Activated naive CD4-positive, alpha-beta T cell treated with anti-CD3 and anti-CD28 coated beads for 36 hours (primary cell): ENCODE measurements at regions of chr7 and their contacts with region 1.

Region 1: DNA sequence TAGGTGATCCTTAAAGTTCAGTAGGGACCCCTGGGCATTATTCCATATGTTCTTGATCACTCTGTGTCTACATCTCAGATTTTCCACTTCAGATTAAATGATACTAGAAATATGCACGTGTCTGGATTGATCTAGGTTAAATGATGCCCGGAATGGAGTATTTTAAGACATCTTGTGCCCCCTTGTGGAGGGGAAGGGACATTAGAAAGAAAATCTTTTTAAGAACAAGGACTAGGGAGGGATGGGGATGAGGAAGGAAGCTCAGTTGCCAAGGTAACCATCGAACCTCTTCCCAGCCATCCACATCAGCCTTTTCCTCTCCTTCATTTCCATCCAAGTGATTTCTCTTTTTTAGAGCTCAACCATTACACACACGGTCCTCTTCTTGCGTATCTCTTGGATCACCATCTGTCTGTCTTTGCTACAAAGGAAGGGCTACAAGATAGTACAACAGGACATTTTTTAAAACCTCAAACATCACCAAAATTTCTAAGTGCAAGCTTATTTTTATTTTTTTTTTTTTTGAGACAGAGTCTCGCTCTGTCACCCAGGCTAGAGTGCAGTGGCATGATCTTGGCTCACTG is 40.5 kb downstream of the PRSS2 start:
- DNase-seq: peak; percentile 61
- H3K4me3 Mint-ChIP-seq: peak overlapping the region; percentile 42
- H3K27ac Mint-ChIP-seq: peak overlapping the region; percentile 99
- H3K4me1 Mint-ChIP-seq: peaks cover 83% of the 10 kb centered on the region
- H3K27me3 Mint-ChIP-seq: no peaks in the 10 kb centered on the region

Region 2: DNA sequence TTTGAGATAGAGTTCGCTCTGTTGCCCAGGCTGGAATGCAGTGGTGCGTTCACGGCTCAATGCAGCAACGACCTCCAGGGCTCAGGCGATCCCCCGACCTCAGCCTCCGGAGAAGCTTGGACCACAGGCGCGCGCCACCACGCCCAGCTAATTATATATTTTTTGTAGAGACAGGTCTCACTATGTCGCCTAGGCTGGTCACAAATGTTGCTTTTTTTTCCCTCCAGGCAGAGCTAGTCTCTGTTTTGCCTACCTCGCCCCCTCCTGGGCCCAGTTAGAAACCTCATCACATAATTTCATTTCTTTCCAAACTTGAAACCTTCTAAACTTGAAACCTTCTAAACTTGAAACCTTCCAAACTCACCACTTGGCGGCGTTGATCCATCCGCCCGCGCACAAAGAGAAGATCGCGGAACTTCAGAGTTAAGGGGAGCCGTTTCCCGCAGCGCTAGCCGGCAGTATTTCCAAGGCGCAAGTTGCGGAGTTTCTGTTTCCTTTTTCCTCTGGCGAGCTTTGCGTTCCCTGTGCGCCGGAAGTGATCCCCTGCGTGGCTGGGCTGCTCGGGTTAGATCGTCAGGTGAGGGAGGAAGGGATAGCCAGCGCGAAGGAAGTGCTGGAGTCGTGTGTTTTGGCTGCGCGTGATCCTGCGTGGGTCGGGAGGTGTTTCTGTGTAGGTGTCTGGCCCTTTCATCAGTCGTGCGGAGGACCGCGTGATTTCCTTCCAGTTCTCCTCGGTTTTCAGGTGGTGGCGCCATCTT is 1073.2 kb before region 1 on chr7 and contains the start of gene SSBP1:
- CTCF ChIA-PET with region 1: no interaction called
- intact Hi-C with region 1: loop called (anchors 10 kb)
- DNase-seq: peak; percentile 95
- H3K4me3 Mint-ChIP-seq: peak within 1 kb of the TSS; percentile 90
- H3K27ac Mint-ChIP-seq: peak within 1 kb of the TSS; percentile 96
- H3K4me1 Mint-ChIP-seq: peaks cover 36% of the 10 kb centered on the region
- H3K27me3 Mint-ChIP-seq: no peaks in the 10 kb centered on the region
- total RNA-seq, gene SSBP1: 202 to 230 TPM

Region 3: DNA sequence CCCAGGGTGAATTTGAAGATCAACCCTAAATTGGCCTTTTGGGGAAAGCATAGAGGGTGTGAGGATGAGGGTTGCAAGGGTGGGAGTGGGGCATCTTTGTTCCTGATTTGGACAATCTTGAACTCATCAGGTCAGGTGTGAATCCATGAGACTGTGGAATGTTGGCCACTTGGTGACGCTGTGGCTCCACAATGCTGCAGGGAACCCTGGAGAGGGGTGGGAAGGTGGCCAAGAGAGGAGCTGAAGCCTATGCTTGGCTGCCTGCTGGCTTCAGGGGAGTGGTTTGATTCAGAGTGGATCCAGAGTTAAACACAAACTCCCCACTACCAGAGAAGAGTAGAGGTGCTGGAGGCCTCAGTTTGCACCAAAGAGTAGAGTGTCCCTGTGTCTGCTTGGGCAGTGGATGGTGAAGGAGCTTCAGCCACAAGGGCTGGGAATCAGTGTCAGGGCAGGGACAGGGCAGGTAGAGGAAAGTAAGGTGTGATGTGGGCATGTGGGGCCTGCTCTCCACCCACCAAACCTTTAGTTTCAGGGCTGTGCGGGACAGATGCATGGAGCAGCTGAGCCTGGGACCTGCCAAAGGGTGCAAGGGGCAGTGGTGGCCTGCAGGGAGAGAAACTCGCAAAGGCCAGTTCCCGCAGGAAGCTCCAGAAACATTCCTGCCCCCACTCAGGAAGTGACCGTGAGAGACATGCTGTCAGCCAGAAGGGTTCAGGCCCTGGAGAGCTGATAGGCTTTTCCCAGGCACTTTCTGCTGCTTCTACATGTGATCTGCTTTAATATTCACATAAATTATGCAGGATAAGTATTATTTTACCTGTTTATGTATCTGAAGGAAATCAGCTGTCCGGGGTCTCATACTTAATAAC is 472.4 kb before region 1 on chr7:
- CTCF ChIA-PET with region 1: interaction called, 3 read pairs
- intact Hi-C with region 1: loop called (anchors 5 kb)
- DNase-seq: peak; percentile 64
- H3K4me3 Mint-ChIP-seq: no peak overlapping the region
- H3K27ac Mint-ChIP-seq: peak overlapping the region; percentile 73
- H3K4me1 Mint-ChIP-seq: peaks cover 19% of the 10 kb centered on the region
- H3K27me3 Mint-ChIP-seq: peaks cover 2% of the 10 kb centered on the region

Region 4: GRCh38 chr7:142557971-142558582 is 253.2 kb before region 1 on chr7:
- CTCF ChIA-PET with region 1: no interaction called
- intact Hi-C with region 1: loop called (anchors 1 kb)
- DNase-seq: peak; percentile 73
- H3K4me3 Mint-ChIP-seq: peak overlapping the region; percentile 58
- H3K27ac Mint-ChIP-seq: peak overlapping the region; percentile 79
- H3K4me1 Mint-ChIP-seq: peaks cover 8% of the 10 kb centered on the region
- H3K27me3 Mint-ChIP-seq: peaks cover 4% of the 10 kb centered on the region

Region 5: GRCh38 chr7:142711746-142712619 is 99.3 kb before region 1 on chr7:
- CTCF ChIA-PET with region 1: interaction called, 10 read pairs
- intact Hi-C with region 1: loop called (anchors 1 kb)
- DNase-seq: peak; percentile 51
- H3K4me3 Mint-ChIP-seq: peak overlapping the region; percentile 78
- H3K27ac Mint-ChIP-seq: peak overlapping the region; percentile 89
- H3K4me1 Mint-ChIP-seq: peaks cover 43% of the 10 kb centered on the region
- H3K27me3 Mint-ChIP-seq: no peaks in the 10 kb centered on the region

Region 6: DNA sequence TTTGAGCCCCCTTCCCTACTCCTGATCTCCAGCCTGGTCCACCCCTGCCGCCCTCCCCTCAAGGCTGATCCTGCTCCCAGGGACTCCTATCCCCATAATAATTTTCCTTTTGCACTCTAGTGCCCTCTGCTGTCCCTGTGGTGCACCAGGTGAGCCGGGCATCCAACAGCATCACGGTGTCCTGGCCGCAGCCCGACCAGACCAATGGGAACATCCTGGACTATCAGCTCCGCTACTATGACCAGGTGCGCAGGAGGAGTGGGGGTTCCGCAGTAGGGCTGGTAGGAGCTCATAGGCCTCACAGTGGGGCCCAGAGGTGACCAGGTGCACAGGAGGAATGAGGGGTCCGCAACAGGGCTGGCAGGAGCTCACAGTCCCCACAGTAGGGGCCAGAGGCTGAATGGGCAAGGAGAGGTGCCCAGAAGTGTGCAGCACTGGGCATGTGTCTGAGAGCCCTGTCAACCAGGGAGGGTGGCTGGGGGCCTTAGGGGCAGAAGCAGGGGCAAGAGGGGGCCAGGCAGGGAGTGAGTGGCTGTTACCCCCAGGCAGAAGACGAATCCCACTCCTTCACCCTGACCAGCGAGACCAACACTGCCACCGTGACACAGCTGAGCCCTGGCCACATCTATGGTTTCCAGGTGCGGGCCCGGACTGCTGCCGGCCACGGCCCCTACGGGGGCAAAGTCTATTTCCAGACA is 55.3 kb after region 1 on chr7:
- CTCF ChIA-PET with region 1: interaction called, 21 read pairs
- intact Hi-C with region 1: no loop called
- DNase-seq: peak; percentile 27
- H3K4me3 Mint-ChIP-seq: no peak overlapping the region
- H3K27ac Mint-ChIP-seq: peak overlapping the region; percentile 46
- H3K4me1 Mint-ChIP-seq: peaks cover 2% of the 10 kb centered on the region
- H3K27me3 Mint-ChIP-seq: no peaks in the 10 kb centered on the region

Region 7: GRCh38 chr7:143380255-143380645 is 569.0 kb after region 1 on chr7:
- CTCF ChIA-PET with region 1: interaction called, 3 read pairs
- intact Hi-C with region 1: loop called (anchors 2 kb)
- DNase-seq: peak; percentile 93
- H3K4me3 Mint-ChIP-seq: peak overlapping the region; percentile 82
- H3K27ac Mint-ChIP-seq: peak overlapping the region; percentile 92
- H3K4me1 Mint-ChIP-seq: peaks cover 35% of the 10 kb centered on the region
- H3K27me3 Mint-ChIP-seq: no peaks in the 10 kb centered on the region